MCF 10A (cell line): ENCODE measurements at regions of chr21 and their contacts with region 1.

Region 1: DNA sequence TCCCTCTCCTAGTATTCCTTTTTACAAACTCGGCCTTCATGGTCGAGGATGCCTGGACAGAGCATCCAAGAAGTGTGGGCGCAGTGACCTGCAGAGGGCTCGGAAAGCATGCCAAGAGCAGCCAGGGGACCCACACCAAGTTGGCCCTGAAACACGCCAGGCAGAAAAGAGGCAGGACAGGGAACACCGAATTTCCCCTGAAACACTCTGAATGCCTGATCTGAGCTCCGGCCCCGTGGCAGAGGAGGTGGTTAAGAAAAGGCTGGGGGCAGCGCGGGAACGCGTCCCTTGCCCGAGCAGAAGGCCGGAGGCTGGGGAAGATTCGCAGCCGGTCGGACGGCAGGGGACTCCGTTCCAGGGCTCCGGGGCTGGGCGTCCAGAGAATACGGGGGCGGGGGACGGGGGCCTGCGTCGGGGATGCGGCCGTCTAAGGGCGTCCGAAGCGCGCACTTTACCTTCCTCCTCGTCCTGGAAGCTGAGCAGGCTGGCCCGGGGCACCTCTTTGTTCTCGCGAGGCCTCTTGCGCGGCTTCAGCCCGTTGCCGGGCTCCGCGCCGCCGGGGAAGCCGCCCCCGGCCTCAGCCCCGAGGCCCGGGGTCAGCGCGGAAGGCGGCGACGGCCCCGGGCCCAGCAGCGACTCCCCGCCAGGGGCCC is 558 bp downstream of the PAXBP1 start:
- DNase-seq: peak; percentile 61
- H3K4me3 Mint-ChIP-seq: peak overlapping the region; percentile 79
- H3K27ac Mint-ChIP-seq: peak overlapping the region; percentile 93
- H3K4me1 Mint-ChIP-seq: peaks cover 26% of the 10 kb centered on the region
- H3K27me3 Mint-ChIP-seq: no peaks in the 10 kb centered on the region
- CTCF ChIP-seq: no peak

Region 2: DNA sequence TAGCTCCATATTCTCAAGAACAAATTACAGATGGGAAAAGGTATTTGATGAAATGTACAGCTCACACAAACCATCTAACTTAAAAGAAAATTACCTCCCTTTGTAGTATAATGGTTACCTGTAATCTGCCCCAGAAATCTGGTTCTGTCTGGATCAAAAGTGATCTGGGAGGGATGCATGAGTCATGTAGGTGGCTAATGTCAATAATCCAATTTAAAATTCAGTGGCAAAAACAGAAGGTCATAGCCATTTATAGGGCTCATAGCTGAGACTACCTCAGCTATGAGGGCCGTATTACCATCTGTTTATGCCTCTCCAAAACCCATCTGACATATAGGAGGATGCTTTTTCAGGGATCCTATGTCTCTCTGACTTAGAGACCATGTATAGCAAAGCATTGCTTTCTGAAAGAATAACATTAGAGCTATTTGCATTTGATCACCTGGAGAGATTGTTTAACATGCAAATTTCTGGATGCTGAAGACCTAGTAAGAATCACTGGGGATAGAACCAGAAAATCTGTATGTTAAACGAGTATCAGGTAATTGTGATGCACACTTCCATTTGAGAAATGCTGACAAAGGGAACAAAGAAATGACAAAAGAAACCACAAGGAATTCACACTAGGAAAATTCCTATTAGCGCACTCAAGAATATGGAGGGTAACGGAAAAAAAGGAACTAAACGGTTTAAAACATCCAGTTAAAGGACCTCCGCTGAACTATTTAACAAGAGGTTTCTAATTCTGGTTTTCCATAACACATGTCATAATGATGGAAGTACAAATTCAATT is 17.0 kb before region 1 on chr21:
- CTCF ChIA-PET with region 1: interaction called, 5 read pairs
- POLR2A ChIA-PET with region 1: interaction called, 64 read pairs
- intact Hi-C with region 1: no loop called
- DNase-seq: peak; percentile 8
- H3K4me3 Mint-ChIP-seq: no peak overlapping the region
- H3K27ac Mint-ChIP-seq: peak overlapping the region; percentile 47
- H3K4me1 Mint-ChIP-seq: no peaks in the 10 kb centered on the region
- H3K27me3 Mint-ChIP-seq: no peaks in the 10 kb centered on the region
- CTCF ChIP-seq: no peak

Region 3: GRCh38 chr21:32782698-32783097 is 11.7 kb after region 1 on chr21:
- CTCF ChIA-PET with region 1: interaction called, 5 read pairs
- POLR2A ChIA-PET with region 1: interaction called, 10 read pairs
- intact Hi-C with region 1: no loop called
- DNase-seq: no peak
- H3K4me3 Mint-ChIP-seq: no peak overlapping the region
- H3K27ac Mint-ChIP-seq: no peak overlapping the region
- H3K4me1 Mint-ChIP-seq: no peaks in the 10 kb centered on the region
- H3K27me3 Mint-ChIP-seq: no peaks in the 10 kb centered on the region
- CTCF ChIP-seq: no peak

Region 4: GRCh38 chr21:33479679-33480480 is 708.9 kb after region 1 on chr21 and contains the start of gene TMEM50B:
- CTCF ChIA-PET with region 1: no interaction called
- POLR2A ChIA-PET with region 1: interaction called, 12 read pairs
- intact Hi-C with region 1: no loop called
- DNase-seq: peak; percentile 95
- H3K4me3 Mint-ChIP-seq: peak within 1 kb of the TSS; percentile 87
- H3K27ac Mint-ChIP-seq: peak within 1 kb of the TSS; percentile 74
- H3K4me1 Mint-ChIP-seq: peaks cover 5% of the 10 kb centered on the region
- H3K27me3 Mint-ChIP-seq: no peaks in the 10 kb centered on the region
- CTCF ChIP-seq: peak; percentile 30
- total RNA-seq, gene TMEM50B: 20.7 and 27.8 TPM in 2 replicates